Pancreas (tissue), 10 donors: ENCODE measurements at regions of chr12 and their contacts with region 1.

Region 1: GRCh38 chr12:63826006-63826585 is 18.4 kb upstream of the SRGAP1 start:
- DNase-seq: no peak
- ATAC-seq: peak; percentile 56 to 88 (median 84)
- H3K4me3 ChIP-seq: no peak overlapping the region
- H3K27ac ChIP-seq: no peak overlapping the region
- H3K4me1 ChIP-seq: no peaks in the 10 kb centered on the region
- H3K27me3 ChIP-seq: no peaks in the 10 kb centered on the region
- CTCF ChIP-seq: peak; percentile 23 to 70 (median 60)

Region 2: GRCh38 chr12:63779498-63780481 is 46.3 kb before region 1 on chr12 and contains the start of gene RXYLT1:
- intact Hi-C with region 1: no loop called
- DNase-seq: peak; percentile 78 to 95 (median 88)
- ATAC-seq: peak; percentile 98 to 99 (median 98)
- H3K4me3 ChIP-seq: peak within 1 kb of the TSS; percentile 64 to 81 (median 71)
- H3K27ac ChIP-seq: peak within 1 kb of the TSS; percentile 82 to 88 (median 84)
- H3K4me1 ChIP-seq: peaks cover 8 to 10% (median 9%) of the 10 kb centered on the region in 3 donors
- H3K27me3 ChIP-seq: no peaks in the 10 kb centered on the region
- CTCF ChIP-seq: no peak
- total RNA-seq, gene RXYLT1: 8.7 to 12.2 (median 11.9) TPM

Region 3: GRCh38 chr12:63955831-63956609 is 129.9 kb after region 1 on chr12:
- intact Hi-C with region 1: no loop called
- DNase-seq: peak in 2 of 6 donors; percentile 41 to 50
- ATAC-seq: peak; percentile 92 to 96 (median 94)
- H3K4me3 ChIP-seq: no peak overlapping the region
- H3K27ac ChIP-seq: peak overlapping the region in 3 of 4 donors; percentile 10 to 46 (median 33)
- H3K4me1 ChIP-seq: peaks cover 11 to 28% (median 14%) of the 10 kb centered on the region in 3 donors
- H3K27me3 ChIP-seq: no peaks in the 10 kb centered on the region
- CTCF ChIP-seq: no peak

Region 4: GRCh38 chr12:64256166-64256800 is 430.2 kb after region 1 on chr12:
- intact Hi-C with region 1: loop called in 2 of 3 experiments (anchors 5 kb)
- DNase-seq: no peak
- ATAC-seq: peak in 3 of 4 donors; percentile 71 to 81 (median 72)
- H3K4me3 ChIP-seq: no peak overlapping the region
- H3K27ac ChIP-seq: no peak overlapping the region
- H3K4me1 ChIP-seq: no peaks in the 10 kb centered on the region
- H3K27me3 ChIP-seq: no peaks in the 10 kb centered on the region
- CTCF ChIP-seq: peak; percentile 36 to 56 (median 46)